Naive thymus-derived CD4-positive, alpha-beta T cell (primary cell): ENCODE measurements at regions of chr16 and their contacts with region 1.

Region 1: GRCh38 chr16:31094424-31095120 is at the start of gene VKORC1:
- DNase-seq: peak; percentile 66 to 89 (median 88)
- ATAC-seq: peak; percentile 93
- H3K4me3 ChIP-seq: peak within 1 kb of the TSS; percentile 99
- H3K4me3 Mint-ChIP-seq: peak within 1 kb of the TSS; percentile 92 to 99 (median 94)
- H3K27ac ChIP-seq: peak within 1 kb of the TSS; percentile 85
- H3K27ac Mint-ChIP-seq: peak within 1 kb of the TSS; percentile 67 to 95 (median 91)
- H3K4me1 ChIP-seq: peaks cover 14 to 18% of the 10 kb centered on the region in 2 donors
- H3K4me1 Mint-ChIP-seq: peaks cover 14 to 42% (median 29%) of the 10 kb centered on the region in 7 donors
- H3K27me3 ChIP-seq: no peaks in the 10 kb centered on the region
- H3K27me3 Mint-ChIP-seq: no peaks in the 10 kb centered on the region
- total RNA-seq, gene VKORC1: 29.5 to 69.3 (median 35.6) TPM

Region 2: DNA sequence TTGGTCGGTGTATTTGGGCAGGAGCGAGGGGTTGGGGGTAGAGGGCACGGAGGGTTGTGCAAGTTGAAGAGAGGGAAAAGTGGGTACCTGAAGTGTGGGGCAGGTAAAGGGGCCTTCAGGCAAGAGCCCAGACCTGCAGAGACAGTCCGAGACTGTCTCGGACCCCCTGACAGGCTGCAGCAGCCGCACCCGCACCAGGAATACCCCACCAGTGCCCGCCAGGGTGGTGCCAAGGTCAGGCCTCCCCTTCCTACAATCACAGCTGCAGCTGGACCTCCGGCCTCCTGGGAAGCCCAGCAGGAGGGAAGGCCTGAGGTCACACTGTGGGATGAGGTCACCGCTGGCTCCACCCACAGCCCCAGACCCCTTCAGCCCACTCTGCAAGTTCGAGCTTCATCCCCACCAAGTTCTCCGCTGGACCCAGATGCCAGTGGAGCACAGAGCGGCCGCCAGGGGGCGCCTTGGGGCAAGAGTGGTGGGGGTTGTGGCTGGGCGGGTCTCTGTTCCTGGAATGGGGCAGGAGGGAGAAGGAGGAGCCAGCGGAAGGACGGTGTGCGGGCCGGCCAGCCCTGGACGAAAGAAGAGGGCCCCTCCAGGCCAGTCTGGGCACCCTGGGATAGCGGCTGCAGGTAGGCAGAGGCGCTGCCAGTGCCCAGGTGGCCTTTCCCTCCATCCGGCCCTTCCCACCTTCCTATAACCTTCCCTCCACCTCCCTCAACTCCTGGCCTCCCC is 109.7 kb before region 1 on chr16 and contains the start of gene HSD3B7:
- CTCF ChIA-PET with region 1: no interaction called
- POLR2A ChIA-PET with region 1: no interaction called
- intact Hi-C with region 1: loop called (anchors 1 kb)
- DNase-seq: peak; percentile 54 to 91 (median 72)
- ATAC-seq: peak; percentile 86
- H3K4me3 ChIP-seq: no peak within 1 kb of the TSS
- H3K4me3 Mint-ChIP-seq: peak within 1 kb of the TSS in 3 of 10 donors; percentile 39 to 54 (median 51)
- H3K27ac ChIP-seq: no peak within 1 kb of the TSS
- H3K27ac Mint-ChIP-seq: peak within 1 kb of the TSS in 2 of 9 donors; percentile 29 to 62
- H3K4me1 ChIP-seq: no peaks in the 10 kb centered on the region
- H3K4me1 Mint-ChIP-seq: peaks cover 0 to 17% (median 0%) of the 10 kb centered on the region in 7 donors
- H3K27me3 ChIP-seq: no peaks in the 10 kb centered on the region
- H3K27me3 Mint-ChIP-seq: no peaks in the 10 kb centered on the region
- total RNA-seq, gene HSD3B7: 0.66 to 7.0 (median 3.3) TPM

Region 3: DNA sequence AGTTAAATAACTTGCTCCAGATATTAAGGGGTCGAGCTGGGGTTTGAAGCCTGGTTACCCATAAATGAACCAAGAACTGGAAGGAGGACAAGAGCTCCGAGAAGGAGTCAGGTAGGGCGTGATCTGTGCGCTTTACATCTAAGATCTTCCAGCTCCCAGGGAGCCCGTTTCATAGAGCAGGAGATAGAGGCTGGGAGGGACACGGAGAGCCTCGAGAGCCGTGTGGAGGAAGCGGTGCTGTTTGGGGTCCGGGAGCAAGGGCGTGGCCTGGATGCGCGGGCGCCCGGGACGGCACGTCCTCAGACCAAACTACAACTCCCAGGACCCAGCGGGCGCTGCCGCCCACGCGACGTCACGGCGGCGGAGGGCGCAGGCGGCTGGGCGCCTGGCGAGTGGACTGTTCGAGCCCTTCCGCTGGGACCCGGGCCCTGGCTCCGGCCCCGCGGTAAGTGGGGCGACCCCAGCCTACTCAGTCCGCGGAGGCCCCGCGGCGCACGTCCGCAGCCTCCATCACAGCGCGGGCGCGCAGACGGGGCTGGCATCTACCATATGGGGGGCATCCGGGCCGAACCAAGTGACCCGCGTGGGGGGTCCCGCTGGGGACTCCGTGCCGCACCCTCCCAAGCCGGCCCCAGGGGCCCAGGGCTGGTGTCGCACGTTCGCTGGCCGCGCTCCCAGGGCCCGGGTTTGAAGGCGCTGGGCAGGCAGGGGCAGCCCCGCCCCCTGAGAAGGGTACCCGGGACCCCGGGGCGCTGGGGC is 13.6 kb after region 1 on chr16 and contains the start of gene BCKDK:
- CTCF ChIA-PET with region 1: interaction called, 4 read pairs
- POLR2A ChIA-PET with region 1: interaction called, 3 read pairs
- intact Hi-C with region 1: loop called (anchors 2 kb)
- DNase-seq: peak; percentile 31 to 84 (median 39)
- ATAC-seq: peak; percentile 82
- H3K4me3 ChIP-seq: peak within 1 kb of the TSS; percentile 74
- H3K4me3 Mint-ChIP-seq: peak within 1 kb of the TSS; percentile 77 to 91 (median 85)
- H3K27ac ChIP-seq: peak within 1 kb of the TSS; percentile 82
- H3K27ac Mint-ChIP-seq: peak within 1 kb of the TSS; percentile 58 to 88 (median 84)
- H3K4me1 ChIP-seq: peaks cover 4 to 16% of the 10 kb centered on the region in 2 donors
- H3K4me1 Mint-ChIP-seq: peaks cover 10 to 32% (median 19%) of the 10 kb centered on the region in 7 donors
- H3K27me3 ChIP-seq: no peaks in the 10 kb centered on the region
- H3K27me3 Mint-ChIP-seq: no peaks in the 10 kb centered on the region
- total RNA-seq, gene BCKDK: 10.3 to 30.8 (median 20.8) TPM

Region 4: DNA sequence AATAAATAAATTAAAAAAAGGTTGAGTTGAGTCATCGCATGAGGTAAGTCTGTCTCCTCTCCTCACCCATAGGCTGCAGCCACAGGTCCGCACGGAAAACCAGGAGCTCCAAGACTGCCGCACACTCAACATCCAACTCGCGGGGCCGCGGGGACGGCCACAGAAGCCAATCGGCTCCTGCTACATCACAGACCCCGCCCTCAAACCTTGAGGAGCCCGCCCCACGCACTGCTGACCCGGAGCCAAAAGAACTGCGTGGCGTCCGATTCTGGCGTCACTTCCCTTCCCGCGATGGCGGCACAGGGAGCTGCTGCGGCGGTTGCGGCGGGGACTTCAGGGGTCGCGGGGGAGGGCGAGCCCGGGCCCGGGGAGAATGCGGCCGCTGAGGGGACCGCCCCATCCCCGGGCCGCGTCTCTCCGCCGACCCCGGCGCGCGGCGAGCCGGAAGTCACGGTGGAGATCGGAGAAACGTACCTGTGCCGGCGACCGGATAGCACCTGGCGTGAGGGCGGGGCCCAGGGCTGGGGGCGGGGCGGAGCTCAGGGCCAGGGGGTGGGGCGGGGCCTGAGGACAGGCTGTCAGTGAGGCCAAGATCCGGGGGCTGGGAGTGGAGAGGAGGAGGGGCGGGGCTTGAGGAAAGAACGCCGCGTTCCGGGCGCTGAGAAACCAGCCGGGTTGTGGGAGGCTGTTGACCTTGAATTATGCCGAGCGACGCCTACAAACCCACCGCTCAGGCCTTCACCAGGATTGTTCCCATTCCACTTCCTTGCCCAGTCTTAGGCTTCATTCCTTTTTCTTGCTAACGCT is 23.0 kb after region 1 on chr16 and contains the start of gene KAT8:
- CTCF ChIA-PET with region 1: no interaction called
- POLR2A ChIA-PET with region 1: interaction called, 3 read pairs
- intact Hi-C with region 1: loop called (anchors 1 kb)
- DNase-seq: peak; percentile 88 to 99 (median 97)
- ATAC-seq: peak; percentile 95
- H3K4me3 ChIP-seq: peak within 1 kb of the TSS; percentile 65
- H3K4me3 Mint-ChIP-seq: peak within 1 kb of the TSS; percentile 86 to 95 (median 90)
- H3K27ac ChIP-seq: peak within 1 kb of the TSS; percentile 98
- H3K27ac Mint-ChIP-seq: peak within 1 kb of the TSS; percentile 77 to 96 (median 89)
- H3K4me1 ChIP-seq: peaks cover 7 to 15% of the 10 kb centered on the region in 2 donors
- H3K4me1 Mint-ChIP-seq: peaks cover 12 to 32% (median 24%) of the 10 kb centered on the region in 7 donors
- H3K27me3 ChIP-seq: no peaks in the 10 kb centered on the region
- H3K27me3 Mint-ChIP-seq: no peaks in the 10 kb centered on the region
- total RNA-seq, gene KAT8: 63.0 to 134 (median 112) TPM

Region 5: GRCh38 chr16:31395647-31396046 is 301.1 kb after region 1 on chr16:
- CTCF ChIA-PET with region 1: no interaction called
- POLR2A ChIA-PET with region 1: no interaction called
- intact Hi-C with region 1: no loop called
- DNase-seq: no peak
- ATAC-seq: no peak
- H3K4me3 ChIP-seq: no peak overlapping the region
- H3K4me3 Mint-ChIP-seq: no peak overlapping the region
- H3K27ac ChIP-seq: no peak overlapping the region
- H3K27ac Mint-ChIP-seq: no peak overlapping the region
- H3K4me1 ChIP-seq: peaks cover 0 to 21% of the 10 kb centered on the region in 2 donors
- H3K4me1 Mint-ChIP-seq: peaks cover 0 to 21% (median 6%) of the 10 kb centered on the region in 7 donors
- H3K27me3 ChIP-seq: no peaks in the 10 kb centered on the region
- H3K27me3 Mint-ChIP-seq: peaks cover 0 to 6% (median 0%) of the 10 kb centered on the region in 5 donors